Activated naive CD4-positive, alpha-beta T cell treated with anti-CD3 and anti-CD28 coated beads, Interleukin-2, amount 10 ng/mL, durations not matched to agents 7 days and 5 days (primary cell): ENCODE measurements at regions of chr3 and their contacts with region 1.

Region 1: DNA sequence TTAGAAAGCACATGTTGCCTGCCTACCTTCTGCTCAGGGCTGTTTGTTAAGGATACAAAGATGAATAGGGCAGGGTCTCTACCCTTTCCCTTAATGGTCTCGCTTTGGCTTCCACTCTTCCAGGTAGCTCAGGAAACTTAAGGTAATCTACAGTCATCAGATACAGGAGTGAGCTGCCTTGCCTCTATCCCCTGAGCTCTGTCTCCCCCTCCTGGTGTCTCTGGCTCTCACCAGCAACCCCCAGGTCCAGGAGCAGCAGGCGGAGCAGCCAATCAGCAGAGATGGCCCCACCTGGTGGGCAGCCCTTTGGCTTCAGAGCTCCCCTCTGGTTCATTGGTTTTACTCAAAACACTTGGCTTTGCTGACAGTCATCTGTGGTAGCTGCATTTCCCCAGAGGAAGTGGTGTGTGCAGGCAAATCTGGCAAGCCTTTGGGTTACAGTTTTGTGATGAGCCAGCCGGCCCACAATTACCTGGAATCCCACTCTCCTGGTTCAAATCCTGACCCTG is 8.5 kb upstream of the CX3CR1 start:
- DNase-seq: peak; percentile 90
- H3K4me3 Mint-ChIP-seq: no peak overlapping the region
- H3K27ac Mint-ChIP-seq: no peak overlapping the region
- H3K4me1 Mint-ChIP-seq: peaks cover 39% of the 10 kb centered on the region
- H3K27me3 Mint-ChIP-seq: peaks cover 3% of the 10 kb centered on the region

Region 2: GRCh38 chr3:39107388-39108199 is 180.8 kb before region 1 on chr3 and contains the starts of genes GORASP1 and TTC21A:
- CTCF ChIA-PET with region 1: interaction called, 73 read pairs
- DNase-seq: peak; percentile 85
- H3K4me3 Mint-ChIP-seq: peak within 1 kb of the TSS; percentile 78
- H3K27ac Mint-ChIP-seq: peak within 1 kb of the TSS; percentile 83
- H3K4me1 Mint-ChIP-seq: peaks cover 49% of the 10 kb centered on the region
- H3K27me3 Mint-ChIP-seq: peaks cover 43% of the 10 kb centered on the region

Region 3: GRCh38 chr3:39189959-39190269 is 98.4 kb before region 1 on chr3:
- CTCF ChIA-PET with region 1: interaction called, 358 read pairs
- DNase-seq: peak; percentile 71
- H3K4me3 Mint-ChIP-seq: no peak overlapping the region
- H3K27ac Mint-ChIP-seq: no peak overlapping the region
- H3K4me1 Mint-ChIP-seq: peaks cover 2% of the 10 kb centered on the region
- H3K27me3 Mint-ChIP-seq: peaks cover 14% of the 10 kb centered on the region

Region 4: GRCh38 chr3:39216176-39216790 is 72.1 kb before region 1 on chr3:
- CTCF ChIA-PET with region 1: interaction called, 33 read pairs
- DNase-seq: no peak
- H3K4me3 Mint-ChIP-seq: no peak overlapping the region
- H3K27ac Mint-ChIP-seq: no peak overlapping the region
- H3K4me1 Mint-ChIP-seq: peaks cover 23% of the 10 kb centered on the region
- H3K27me3 Mint-ChIP-seq: peaks cover 60% of the 10 kb centered on the region

Region 5: DNA sequence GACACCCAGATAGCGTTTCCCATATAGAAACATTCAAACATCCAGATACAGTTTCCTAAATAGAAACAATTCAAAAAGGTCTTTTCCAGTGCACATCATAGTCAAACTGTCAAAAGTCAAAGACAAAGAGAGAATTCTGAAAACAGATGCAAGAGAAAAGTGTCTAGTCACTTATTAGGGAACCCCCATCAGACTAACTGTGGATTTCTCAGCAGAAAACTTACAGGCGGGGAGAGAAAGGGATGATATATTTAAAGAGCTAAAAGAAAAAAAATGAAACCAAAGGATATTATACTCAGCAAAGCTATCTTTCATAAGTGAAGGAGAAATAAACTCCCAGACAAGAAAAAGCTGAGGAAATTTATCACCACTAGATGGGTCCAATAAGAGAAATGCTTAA is 13.8 kb after region 1 on chr3:
- CTCF ChIA-PET with region 1: interaction called, 19 read pairs
- DNase-seq: no peak
- H3K4me3 Mint-ChIP-seq: no peak overlapping the region
- H3K27ac Mint-ChIP-seq: no peak overlapping the region
- H3K4me1 Mint-ChIP-seq: no peaks in the 10 kb centered on the region
- H3K27me3 Mint-ChIP-seq: peaks cover 39% of the 10 kb centered on the region

Region 6: GRCh38 chr3:39378088-39378487 is 89.7 kb after region 1 on chr3:
- CTCF ChIA-PET with region 1: interaction called, 138 read pairs
- DNase-seq: peak; percentile 78
- H3K4me3 Mint-ChIP-seq: no peak overlapping the region
- H3K27ac Mint-ChIP-seq: no peak overlapping the region
- H3K4me1 Mint-ChIP-seq: peaks cover 11% of the 10 kb centered on the region
- H3K27me3 Mint-ChIP-seq: peaks cover 5% of the 10 kb centered on the region